ENCODE measurements at regions of chr3 and their contacts with region 1.

Region 1: GRCh38 chr3:78659386-78659987 is 1108.3 kb downstream of the ROBO1 start:
- DNase-seq: no peak
- H3K4me3 ChIP-seq: no peak overlapping the region
- H3K27ac ChIP-seq: no peak overlapping the region
- H3K4me1 ChIP-seq: no peaks in the 10 kb centered on the region
- H3K27me3 ChIP-seq: no peaks in the 10 kb centered on the region
- CTCF ChIP-seq: peak; percentile 70 to 72 (median 71)
- EP300 ChIP-seq: no peak
- POLR2A ChIP-seq: no peak

Region 2: DNA sequence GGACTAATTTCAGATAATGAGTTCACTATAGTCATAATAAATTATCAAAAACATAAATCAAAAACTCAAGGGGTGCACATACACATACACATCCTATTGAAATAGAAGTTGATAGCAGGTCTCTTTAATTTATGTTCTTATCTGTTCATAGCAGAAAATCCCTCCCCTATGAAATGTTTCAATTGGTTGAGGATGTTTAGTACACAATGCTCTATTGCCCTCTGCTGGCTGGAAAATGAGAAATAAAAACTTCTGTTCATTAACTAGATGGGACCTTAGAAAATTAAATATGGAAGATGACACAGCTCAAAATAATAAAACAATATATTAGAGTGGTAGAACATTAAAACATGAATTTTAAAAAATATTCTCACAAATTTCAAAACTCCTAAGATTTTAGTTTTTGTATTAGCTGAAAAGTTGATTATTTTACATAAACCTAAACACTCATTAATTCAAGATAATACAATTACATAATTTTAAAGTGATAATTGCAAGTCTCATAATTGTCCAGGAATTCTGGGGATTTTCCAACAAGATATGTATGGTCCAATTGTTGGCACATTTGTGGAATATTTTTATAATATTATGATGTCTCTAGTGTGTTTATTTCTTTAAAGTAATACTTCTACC is 373.3 kb after region 1 on chr3:
- intact Hi-C with region 1: loop called (anchors 1 kb)
- DNase-seq: no peak
- H3K4me3 ChIP-seq: no peak overlapping the region
- H3K27ac ChIP-seq: no peak overlapping the region
- H3K4me1 ChIP-seq: no peaks in the 10 kb centered on the region
- H3K27me3 ChIP-seq: no peaks in the 10 kb centered on the region
- CTCF ChIP-seq: peak; percentile 46 to 61 (median 60)
- EP300 ChIP-seq: no peak
- POLR2A ChIP-seq: no peak

Measured in esophagus muscularis mucosa (tissue), 4 donors.